ENCODE measurements at regions of chr6 and their contacts with region 1.

Region 1: GRCh38 chr6:124795643-124796463 is 166.4 kb upstream of the RNF217 start:
- DNase-seq: peak in 1 of 2 experiments; percentile 10
- H3K4me3 ChIP-seq: no peak overlapping the region
- H3K27ac ChIP-seq: no peak overlapping the region
- H3K4me1 ChIP-seq: no peaks in the 10 kb centered on the region
- H3K27me3 ChIP-seq: no peaks in the 10 kb centered on the region
- CTCF ChIP-seq: peak; percentile 74

Region 2: DNA sequence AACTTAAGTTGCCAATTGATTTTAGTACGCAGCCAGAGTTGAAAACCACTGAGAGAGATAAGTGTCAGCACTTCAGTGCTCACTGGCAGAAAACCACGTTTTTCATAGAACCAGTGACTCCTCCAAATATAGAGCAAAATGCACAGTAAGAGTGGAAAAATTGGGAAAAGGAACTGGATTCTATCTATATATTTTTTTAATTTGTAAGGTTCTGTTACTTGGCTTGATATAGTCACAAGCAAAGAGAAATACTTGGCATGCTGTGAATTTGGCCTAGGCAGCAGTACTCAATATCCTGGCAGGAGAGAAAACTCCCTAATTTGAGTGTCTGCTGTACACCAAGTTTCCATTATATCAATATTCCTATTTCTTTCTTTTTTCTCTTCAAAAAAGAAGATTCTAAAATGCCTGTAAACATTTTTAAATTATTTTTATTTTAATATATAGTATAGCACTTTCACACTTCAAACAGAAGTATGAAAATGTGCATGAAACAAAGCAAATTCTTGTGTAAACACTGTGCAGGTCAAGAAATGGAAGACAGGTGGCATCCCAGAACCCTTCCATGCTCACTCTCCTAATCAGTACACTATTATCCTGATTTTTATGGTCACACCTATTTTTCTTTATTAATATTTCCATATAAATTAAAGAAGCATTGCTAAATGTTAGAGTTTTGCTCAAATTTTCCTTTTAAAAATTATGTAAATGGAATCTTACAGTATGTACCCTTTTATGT is 395.4 kb before region 1 on chr6:
- CTCF ChIA-PET with region 1: no interaction called
- POLR2A ChIA-PET with region 1: no interaction called
- intact Hi-C with region 1: loop called (anchors 1 kb)
- DNase-seq: no peak
- H3K4me3 ChIP-seq: no peak overlapping the region
- H3K27ac ChIP-seq: no peak overlapping the region
- H3K4me1 ChIP-seq: no peaks in the 10 kb centered on the region
- H3K27me3 ChIP-seq: no peaks in the 10 kb centered on the region
- CTCF ChIP-seq: peak; percentile 43

Region 3: GRCh38 chr6:124823240-124824111 is 27.6 kb after region 1 on chr6:
- CTCF ChIA-PET with region 1: no interaction called
- POLR2A ChIA-PET with region 1: no interaction called
- intact Hi-C with region 1: no loop called
- DNase-seq: no peak
- H3K4me3 ChIP-seq: no peak overlapping the region
- H3K27ac ChIP-seq: no peak overlapping the region
- H3K4me1 ChIP-seq: no peaks in the 10 kb centered on the region
- H3K27me3 ChIP-seq: no peaks in the 10 kb centered on the region
- CTCF ChIP-seq: no peak